Tibial artery (tissue), 4 donors: ENCODE measurements at regions of chr4 and their contacts with region 1.

Region 1: GRCh38 chr4:41977709-41978108 is 3.8 kb upstream of the DCAF4L1 start:
- DNase-seq: no peak
- H3K4me3 ChIP-seq: no peak overlapping the region
- H3K27ac ChIP-seq: no peak overlapping the region
- H3K4me1 ChIP-seq: no peaks in the 10 kb centered on the region
- H3K27me3 ChIP-seq: no peaks in the 10 kb centered on the region
- CTCF ChIP-seq: no peak

Region 2: DNA sequence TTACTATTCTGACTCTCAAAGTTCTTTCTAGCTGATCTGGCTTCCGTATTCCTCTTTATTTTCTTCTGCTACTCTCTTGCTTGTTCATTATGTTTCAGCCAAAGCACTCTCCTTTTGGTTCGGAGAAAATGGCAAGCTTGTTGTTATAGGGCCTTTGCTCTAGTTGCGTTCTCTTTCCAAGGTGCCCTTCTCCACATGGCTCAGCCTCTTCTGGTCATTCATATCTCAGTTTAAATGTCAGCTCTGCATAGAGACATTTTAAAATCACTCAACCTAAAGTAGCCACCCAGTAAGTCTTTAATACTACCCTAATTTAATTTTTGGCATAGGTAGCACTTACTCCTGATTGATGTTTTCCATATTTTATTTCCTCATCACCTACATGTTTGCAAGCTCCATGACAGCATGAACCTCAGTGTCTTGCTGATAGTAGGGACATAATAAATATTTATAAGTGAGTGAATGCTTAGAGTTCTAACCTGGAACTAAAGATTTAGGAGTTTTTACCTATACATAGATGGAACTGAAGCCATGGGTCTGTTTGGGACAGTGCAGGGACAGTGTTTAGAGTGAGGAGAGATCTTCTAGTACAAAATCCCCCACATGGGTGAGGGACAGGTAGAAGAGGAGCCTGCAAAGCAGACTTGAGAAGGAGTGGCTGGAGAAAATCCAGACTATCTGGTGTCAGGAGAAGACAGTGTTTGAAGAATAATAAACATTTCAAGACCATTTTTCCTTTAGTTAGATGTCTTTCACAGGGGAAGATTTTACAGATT is 30.5 kb after region 1 on chr4:
- intact Hi-C with region 1: loop called (anchors 2 kb)
- DNase-seq: no peak
- H3K4me3 ChIP-seq: no peak overlapping the region
- H3K27ac ChIP-seq: no peak overlapping the region
- H3K4me1 ChIP-seq: no peaks in the 10 kb centered on the region
- H3K27me3 ChIP-seq: no peaks in the 10 kb centered on the region
- CTCF ChIP-seq: no peak